Activated CD4-positive, alpha-beta T cell treated with anti-CD3 and anti-CD28 coated beads, Interleukin-2, amount 10 ng/mL, durations not matched to agents 24 days and 14 days (primary cell): ENCODE measurements at regions of chr5 and their contacts with region 1.

Region 1: DNA sequence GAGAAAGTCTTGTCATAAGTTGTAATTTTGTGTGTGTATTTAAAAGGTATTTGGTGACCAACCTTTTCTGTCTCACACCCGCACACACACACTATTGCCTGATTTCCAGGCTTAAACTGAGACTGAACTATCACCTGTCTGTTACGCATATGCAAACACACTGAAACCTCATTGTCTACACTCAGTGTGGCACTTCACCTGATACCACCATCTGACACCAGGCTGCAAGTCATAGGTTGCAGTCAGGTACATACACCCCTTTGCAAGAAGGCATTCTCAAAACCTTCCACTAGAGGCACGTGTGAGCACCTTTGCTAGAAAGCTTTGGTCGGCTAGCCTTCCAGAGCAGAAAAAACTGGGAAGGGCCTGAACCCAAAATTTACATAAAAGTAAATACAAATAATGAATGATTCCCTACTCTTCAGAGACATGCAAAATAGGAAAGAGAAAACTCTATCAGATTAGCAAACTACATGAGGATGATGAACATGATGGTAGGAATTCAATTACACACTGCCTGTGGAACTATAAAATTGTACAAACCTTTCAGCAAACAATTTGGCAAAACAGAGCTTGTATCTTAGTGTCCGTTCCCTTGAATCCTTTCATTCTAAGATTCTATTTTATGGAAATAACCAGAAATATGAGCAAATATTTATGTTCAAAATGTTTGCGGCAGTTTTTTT is 5.9 kb upstream of the FOXD1 start:
- DNase-seq: peak; percentile 78
- H3K4me3 Mint-ChIP-seq: no peak overlapping the region
- H3K27ac Mint-ChIP-seq: no peak overlapping the region
- H3K4me1 Mint-ChIP-seq: peaks cover 2% of the 10 kb centered on the region
- H3K27me3 Mint-ChIP-seq: peaks cover 55% of the 10 kb centered on the region

Region 2: GRCh38 chr5:73081093-73081492 is 373.4 kb before region 1 on chr5:
- intact Hi-C with region 1: loop called (anchors 5 kb)
- DNase-seq: no peak
- H3K4me3 Mint-ChIP-seq: no peak overlapping the region
- H3K27ac Mint-ChIP-seq: no peak overlapping the region
- H3K4me1 Mint-ChIP-seq: no peaks in the 10 kb centered on the region
- H3K27me3 Mint-ChIP-seq: peaks cover 19% of the 10 kb centered on the region

Region 3: GRCh38 chr5:73233347-73234200 is 220.9 kb before region 1 on chr5:
- intact Hi-C with region 1: loop called (anchors 5 kb)
- DNase-seq: no peak
- H3K4me3 Mint-ChIP-seq: no peak overlapping the region
- H3K27ac Mint-ChIP-seq: no peak overlapping the region
- H3K4me1 Mint-ChIP-seq: no peaks in the 10 kb centered on the region
- H3K27me3 Mint-ChIP-seq: peaks cover 70% of the 10 kb centered on the region

Region 4: DNA sequence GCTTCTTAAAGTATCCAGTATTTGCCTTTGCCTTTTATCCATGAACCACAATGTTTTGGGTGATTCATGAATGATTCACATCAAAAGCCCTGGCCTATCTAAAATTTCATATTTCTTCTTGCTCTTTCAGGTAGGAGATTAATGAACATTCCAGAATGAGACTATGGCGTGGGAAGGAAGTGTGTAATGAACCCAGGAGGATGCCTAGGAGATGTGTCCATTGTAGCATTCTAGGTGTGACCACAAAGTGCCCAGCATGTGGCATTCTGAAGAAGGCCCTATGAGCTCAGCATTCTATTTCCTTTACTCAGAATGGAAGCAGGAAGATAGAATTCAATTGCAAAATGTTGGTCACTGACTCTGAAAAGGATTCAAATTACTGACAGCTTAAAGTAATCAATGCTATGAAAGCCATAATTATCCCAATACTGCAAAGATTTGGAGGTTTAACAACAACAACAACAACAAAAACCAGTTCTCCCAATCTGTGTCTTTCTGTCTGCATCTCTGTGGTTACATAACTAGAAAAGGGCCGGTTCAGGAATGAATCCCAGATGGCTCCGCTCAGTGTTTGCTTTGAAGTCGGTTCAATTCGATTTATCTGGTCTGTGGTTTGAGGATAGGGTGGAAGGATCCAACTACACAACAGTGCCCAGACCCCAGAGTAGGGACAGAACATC is 132.6 kb before region 1 on chr5:
- intact Hi-C with region 1: no loop called
- DNase-seq: no peak
- H3K4me3 Mint-ChIP-seq: no peak overlapping the region
- H3K27ac Mint-ChIP-seq: no peak overlapping the region
- H3K4me1 Mint-ChIP-seq: no peaks in the 10 kb centered on the region
- H3K27me3 Mint-ChIP-seq: peaks cover 17% of the 10 kb centered on the region

Region 5: GRCh38 chr5:73419465-73420390 is 34.8 kb before region 1 on chr5:
- intact Hi-C with region 1: loop called (anchors 5 kb)
- DNase-seq: no peak
- H3K4me3 Mint-ChIP-seq: no peak overlapping the region
- H3K27ac Mint-ChIP-seq: no peak overlapping the region
- H3K4me1 Mint-ChIP-seq: peaks cover 2% of the 10 kb centered on the region
- H3K27me3 Mint-ChIP-seq: peaks cover 86% of the 10 kb centered on the region